Breast epithelium (tissue), 4 donors: ENCODE measurements at regions of chr12 and their contacts with region 1.

Region 1: GRCh38 chr12:34361721-34362316 is 339.5 kb downstream of the ALG10 start:
- DNase-seq: no peak
- H3K4me3 ChIP-seq: no peak overlapping the region
- H3K27ac ChIP-seq: no peak overlapping the region
- H3K4me1 ChIP-seq: no peaks in the 10 kb centered on the region
- H3K27me3 ChIP-seq: peaks cover 0 to 8% of the 10 kb centered on the region in 2 donors
- CTCF ChIP-seq: no peak
- POLR2A ChIP-seq: no peak

Region 2: DNA sequence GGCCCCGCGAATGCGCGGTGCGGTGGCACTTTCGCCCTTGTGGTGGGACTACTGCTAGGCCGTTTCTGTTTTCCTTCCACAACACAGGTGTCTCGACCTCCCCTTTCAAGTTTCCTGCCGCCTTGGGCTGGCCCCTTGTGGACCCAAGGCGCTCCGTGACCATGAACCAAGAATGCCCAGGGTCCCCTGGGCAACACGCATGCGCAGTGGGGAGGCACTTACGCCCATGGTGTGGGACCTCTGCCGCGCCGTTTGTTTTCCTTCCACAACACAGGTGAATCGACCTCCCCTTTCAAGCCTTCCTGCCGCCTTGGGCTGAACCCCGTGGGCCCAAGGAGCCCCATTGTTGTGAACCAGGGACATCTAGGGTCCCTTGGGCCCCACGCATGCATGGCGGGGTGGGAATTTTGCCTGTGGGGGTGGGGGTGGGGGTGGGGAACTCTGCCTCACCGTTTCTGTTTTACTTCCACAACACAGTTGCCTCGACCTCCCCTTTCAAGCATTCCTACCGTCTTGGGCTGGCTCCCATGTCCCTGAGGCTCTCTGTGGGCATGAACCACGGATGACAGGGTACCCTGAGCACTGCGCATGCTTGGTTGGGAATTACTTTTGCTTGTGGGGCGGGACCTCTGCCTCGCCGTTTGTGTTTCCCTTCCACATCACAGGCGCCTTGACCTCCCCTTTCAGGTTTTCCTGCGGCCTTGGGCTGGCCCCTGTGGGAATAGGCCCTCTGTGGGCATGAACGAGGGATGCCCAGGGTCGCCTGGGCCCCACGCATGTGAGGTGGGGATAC is 15.6 kb after region 1 on chr12:
- intact Hi-C with region 1: loop called (anchors 1 kb)
- DNase-seq: no peak
- H3K4me3 ChIP-seq: no peak overlapping the region
- H3K27ac ChIP-seq: no peak overlapping the region
- H3K4me1 ChIP-seq: no peaks in the 10 kb centered on the region
- H3K27me3 ChIP-seq: no peaks in the 10 kb centered on the region
- CTCF ChIP-seq: no peak
- POLR2A ChIP-seq: no peak